ENCODE measurements at regions of chr1 and their contacts with region 1.

Region 1: GRCh38 chr1:167499664-167500101 is 18.6 kb downstream of the CD247 start:
- DNase-seq: peak in 6 of 9 donors; percentile 51 to 74 (median 55)
- ATAC-seq: peak; percentile 76
- H3K4me3 ChIP-seq: peak overlapping the region; percentile 8
- H3K4me3 Mint-ChIP-seq: peak overlapping the region; percentile 49 to 88 (median 68)
- H3K27ac ChIP-seq: peak overlapping the region; percentile 96
- H3K27ac Mint-ChIP-seq: peak overlapping the region; percentile 77 to 100 (median 94)
- H3K4me1 ChIP-seq: peaks cover 55 to 99% of the 10 kb centered on the region in 2 donors
- H3K4me1 Mint-ChIP-seq: peaks cover 76 to 100% (median 98%) of the 10 kb centered on the region in 7 donors
- H3K27me3 ChIP-seq: no peaks in the 10 kb centered on the region
- H3K27me3 Mint-ChIP-seq: no peaks in the 10 kb centered on the region

Region 2: DNA sequence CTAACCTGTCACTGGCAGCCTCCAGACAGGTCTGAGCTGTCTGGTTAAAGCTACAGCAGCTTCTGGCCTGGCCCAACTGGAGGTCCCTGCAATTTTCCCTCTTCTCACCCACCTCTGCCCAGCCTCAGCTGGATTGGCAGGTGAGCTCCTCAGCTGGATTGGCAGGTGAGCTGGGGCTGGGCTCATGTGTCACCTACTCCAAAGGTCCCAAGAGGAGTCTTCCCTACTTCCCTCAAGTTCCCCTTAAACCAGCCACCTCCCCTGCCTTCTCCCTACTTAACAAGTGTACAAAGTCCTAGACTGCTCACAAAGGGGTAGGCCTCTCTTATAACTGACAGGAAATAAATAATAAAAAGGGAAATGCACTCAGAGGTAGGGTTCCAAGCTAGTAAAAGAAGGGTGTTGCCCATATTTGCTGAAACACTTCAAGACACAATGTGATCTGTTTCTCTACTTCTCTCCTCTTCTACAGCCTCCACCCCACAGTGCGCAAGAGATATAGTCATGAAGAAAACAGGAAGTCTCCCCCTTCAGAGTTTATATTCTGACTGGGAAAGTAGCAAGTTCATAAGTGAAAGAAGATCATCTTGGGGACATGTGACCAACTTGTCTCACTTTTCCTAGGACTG is 409.3 kb before region 1 on chr1 and contains the start of gene GPA33:
- CTCF ChIA-PET with region 1: no interaction called
- POLR2A ChIA-PET with region 1: no interaction called
- intact Hi-C with region 1: no loop called
- DNase-seq: peak in 7 of 9 donors; percentile 71 to 89 (median 83)
- ATAC-seq: peak; percentile 95
- H3K4me3 ChIP-seq: peak within 1 kb of the TSS; percentile 45
- H3K4me3 Mint-ChIP-seq: peak within 1 kb of the TSS in 9 of 10 donors; percentile 63 to 93 (median 86)
- H3K27ac ChIP-seq: peak within 1 kb of the TSS; percentile 83
- H3K27ac Mint-ChIP-seq: peak within 1 kb of the TSS; percentile 95 to 100 (median 100)
- H3K4me1 ChIP-seq: peaks cover 25 to 33% of the 10 kb centered on the region in 2 donors
- H3K4me1 Mint-ChIP-seq: peaks cover 18 to 80% (median 34%) of the 10 kb centered on the region in 7 donors
- H3K27me3 ChIP-seq: no peaks in the 10 kb centered on the region
- H3K27me3 Mint-ChIP-seq: no peaks in the 10 kb centered on the region
- total RNA-seq, gene GPA33: 5.4 to 32.6 (median 11.3) TPM

Region 3: GRCh38 chr1:167474191-167474716 is 25.4 kb before region 1 on chr1:
- CTCF ChIA-PET with region 1: interaction called, 4 read pairs
- POLR2A ChIA-PET with region 1: interaction called, 12 read pairs
- intact Hi-C with region 1: no loop called
- DNase-seq: peak in 8 of 9 donors; percentile 41 to 87 (median 58)
- ATAC-seq: peak; percentile 89
- H3K4me3 ChIP-seq: peak overlapping the region; percentile 49
- H3K4me3 Mint-ChIP-seq: peak overlapping the region; percentile 52 to 98 (median 86)
- H3K27ac ChIP-seq: peak overlapping the region; percentile 75
- H3K27ac Mint-ChIP-seq: peak overlapping the region; percentile 47 to 98 (median 95)
- H3K4me1 ChIP-seq: peaks cover 36 to 81% of the 10 kb centered on the region in 2 donors
- H3K4me1 Mint-ChIP-seq: peaks cover 57 to 100% (median 94%) of the 10 kb centered on the region in 7 donors
- H3K27me3 ChIP-seq: no peaks in the 10 kb centered on the region
- H3K27me3 Mint-ChIP-seq: no peaks in the 10 kb centered on the region

Region 4: GRCh38 chr1:167510244-167510643 is 10.6 kb after region 1 on chr1:
- CTCF ChIA-PET with region 1: interaction called, 7 read pairs
- POLR2A ChIA-PET with region 1: interaction called, 181 read pairs
- intact Hi-C with region 1: loop called (anchors 1 kb)
- DNase-seq: peak in 1 of 9 donors; percentile 38
- ATAC-seq: peak; percentile 37
- H3K4me3 ChIP-seq: peak overlapping the region; percentile 29
- H3K4me3 Mint-ChIP-seq: peak overlapping the region; percentile 58 to 100 (median 90)
- H3K27ac ChIP-seq: peak overlapping the region; percentile 96
- H3K27ac Mint-ChIP-seq: peak overlapping the region; percentile 80 to 100 (median 94)
- H3K4me1 ChIP-seq: peaks cover 48 to 73% of the 10 kb centered on the region in 2 donors
- H3K4me1 Mint-ChIP-seq: peaks cover 57 to 98% (median 85%) of the 10 kb centered on the region in 7 donors
- H3K27me3 ChIP-seq: no peaks in the 10 kb centered on the region
- H3K27me3 Mint-ChIP-seq: no peaks in the 10 kb centered on the region